Cardiac septum (tissue), 1 donor: ENCODE measurements at regions of chr1 and their contacts with region 1.

Region 1: GRCh38 chr1:56584910-56585528 is 5.7 kb upstream of the PLPP3 start:
- DNase-seq: no peak

Region 2: DNA sequence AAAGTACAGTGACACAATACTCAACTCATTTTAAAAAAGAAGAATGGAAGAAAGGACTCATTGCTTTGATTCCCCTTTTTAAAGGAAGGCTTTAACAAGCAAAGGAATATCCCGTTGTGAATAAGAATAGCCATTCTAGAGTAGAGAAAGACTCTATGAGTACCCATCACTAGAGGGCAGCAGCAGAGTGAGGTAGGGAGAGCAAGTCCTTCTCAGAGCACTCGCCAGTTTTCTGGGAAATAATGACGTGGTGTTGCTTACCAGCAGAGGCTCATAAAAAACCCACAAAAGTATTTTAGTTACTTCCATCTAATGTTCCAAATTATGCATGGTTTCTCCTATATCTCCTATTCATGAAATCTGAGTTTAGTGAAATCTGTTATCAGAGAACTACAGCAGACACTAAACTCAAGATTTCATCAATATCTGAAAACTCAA is 1444.5 kb before region 1 on chr1:
- intact Hi-C with region 1: loop called (anchors 10 kb)
- DNase-seq: no peak

Region 3: DNA sequence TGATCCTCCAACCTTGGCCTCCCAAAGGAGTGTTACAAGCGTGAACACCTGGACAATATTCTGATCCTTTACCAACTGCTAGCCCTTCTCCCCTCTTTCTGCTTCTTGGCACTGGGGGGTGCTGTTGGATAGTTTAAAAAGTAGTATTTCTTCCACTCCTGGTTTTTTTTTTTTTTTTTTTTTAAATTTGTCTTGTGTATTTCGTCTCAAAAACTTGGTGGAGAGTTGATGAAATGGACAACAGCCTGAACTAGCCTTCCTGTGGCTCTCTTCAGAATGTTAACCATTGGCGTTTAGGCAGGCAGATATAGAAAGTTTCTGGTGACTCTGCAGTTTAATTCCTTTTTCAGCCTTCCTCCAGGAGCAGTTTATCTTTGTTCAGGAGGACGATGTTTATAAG is 1300.2 kb before region 1 on chr1:
- intact Hi-C with region 1: loop called (anchors 1 kb)
- DNase-seq: no peak

Region 4: GRCh38 chr1:55375617-55376258 is 1209.3 kb before region 1 on chr1:
- intact Hi-C with region 1: loop called (anchors 5 kb)
- DNase-seq: no peak

Region 5: GRCh38 chr1:55478742-55479141 is 1106.3 kb before region 1 on chr1:
- intact Hi-C with region 1: loop called (anchors 10 kb)
- DNase-seq: no peak

Region 6: GRCh38 chr1:56709269-56709880 is 124.4 kb after region 1 on chr1:
- intact Hi-C with region 1: loop called (anchors 5 kb)
- DNase-seq: no peak

Region 7: GRCh38 chr1:56821140-56821797 is 236.2 kb after region 1 on chr1:
- intact Hi-C with region 1: loop called (anchors 5 kb)
- DNase-seq: peak; percentile 78